Breast epithelium (tissue), 4 donors: ENCODE measurements at regions of chr5 and their contacts with region 1.

Region 1: GRCh38 chr5:92599217-92599810 is 981.7 kb downstream of the NR2F1-AS1 start:
- DNase-seq: no peak
- H3K4me3 ChIP-seq: no peak overlapping the region
- H3K27ac ChIP-seq: no peak overlapping the region
- H3K4me1 ChIP-seq: no peaks in the 10 kb centered on the region
- H3K27me3 ChIP-seq: no peaks in the 10 kb centered on the region
- CTCF ChIP-seq: no peak
- POLR2A ChIP-seq: no peak

Region 2: DNA sequence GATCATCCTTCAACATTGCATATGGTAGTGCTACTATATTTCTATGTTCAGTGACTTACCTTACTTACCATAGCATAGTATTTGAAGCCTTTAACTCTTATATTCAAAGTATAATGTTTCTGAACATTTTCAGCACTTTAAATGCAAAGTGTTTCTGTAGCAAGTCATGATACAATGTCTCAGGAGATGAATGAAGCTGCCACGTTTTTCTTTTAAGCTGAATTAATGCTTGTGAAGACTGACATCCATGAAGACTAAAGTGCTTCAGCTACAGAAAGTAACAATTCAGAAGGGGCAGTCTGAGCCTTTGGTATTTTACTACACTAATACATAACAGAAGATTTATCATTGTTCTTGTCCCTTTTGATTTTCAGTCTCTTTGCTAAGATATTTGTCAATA is 507.1 kb before region 1 on chr5:
- intact Hi-C with region 1: no loop called
- DNase-seq: no peak
- H3K4me3 ChIP-seq: no peak overlapping the region
- H3K27ac ChIP-seq: no peak overlapping the region
- H3K4me1 ChIP-seq: no peaks in the 10 kb centered on the region
- H3K27me3 ChIP-seq: no peaks in the 10 kb centered on the region
- CTCF ChIP-seq: no peak
- POLR2A ChIP-seq: no peak

Region 3: GRCh38 chr5:93100428-93100827 is 501.1 kb after region 1 on chr5:
- intact Hi-C with region 1: loop called (anchors 5 kb)
- DNase-seq: no peak
- H3K4me3 ChIP-seq: no peak overlapping the region
- H3K27ac ChIP-seq: no peak overlapping the region
- H3K4me1 ChIP-seq: no peaks in the 10 kb centered on the region
- H3K27me3 ChIP-seq: no peaks in the 10 kb centered on the region
- CTCF ChIP-seq: no peak
- POLR2A ChIP-seq: no peak